Colonic mucosa (tissue), 4 donors: ENCODE measurements at regions of chr2 and their contacts with region 1.

Region 1: GRCh38 chr2:11344342-11344955 is at the start of gene ROCK2:
- DNase-seq: peak; percentile 88
- H3K4me3 ChIP-seq: peak within 1 kb of the TSS; percentile 77
- H3K27ac ChIP-seq: peak within 1 kb of the TSS; percentile 99
- H3K4me1 ChIP-seq: peaks cover 18% of the 10 kb centered on the region
- H3K27me3 ChIP-seq: no peaks in the 10 kb centered on the region
- CTCF ChIP-seq: no peak
- total RNA-seq, gene ROCK2: 62.7 to 80.9 TPM

Region 2: DNA sequence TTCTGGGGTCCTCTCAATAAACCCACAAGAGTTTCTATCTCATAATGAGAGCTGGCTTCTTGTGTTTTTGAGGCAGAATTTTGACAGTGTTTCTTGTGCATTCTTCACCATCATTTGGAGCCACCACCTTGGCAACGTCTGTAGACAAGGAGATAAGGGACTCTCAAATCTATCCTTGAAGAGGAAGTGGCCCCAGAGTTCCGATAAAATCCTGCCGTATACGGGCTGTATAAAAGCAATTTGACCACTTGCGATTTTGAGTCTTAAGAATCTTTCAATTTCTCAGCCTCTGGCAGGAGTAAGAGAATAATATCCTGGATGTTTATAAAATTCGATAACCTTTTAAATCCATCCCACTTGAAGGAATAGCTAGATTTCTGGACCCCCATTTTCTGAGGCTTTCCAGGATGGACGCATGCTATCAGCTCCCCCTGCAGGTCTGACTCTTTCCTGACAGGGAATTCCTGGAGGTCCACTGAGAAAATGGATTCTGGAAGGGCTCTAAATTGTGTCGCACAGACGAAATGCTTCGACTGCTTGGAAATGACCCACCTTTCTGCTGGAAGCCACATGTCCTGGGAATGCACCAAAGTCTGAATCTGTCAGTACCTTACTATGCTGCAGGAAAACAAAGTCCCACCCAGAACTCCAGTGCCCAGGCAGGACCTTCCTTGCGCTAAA is 67.5 kb after region 1 on chr2:
- intact Hi-C with region 1: loop called (anchors 10 kb)
- DNase-seq: peak; percentile 77
- H3K4me3 ChIP-seq: peak overlapping the region; percentile 31
- H3K27ac ChIP-seq: peak overlapping the region; percentile 3
- H3K4me1 ChIP-seq: peaks cover 8% of the 10 kb centered on the region
- H3K27me3 ChIP-seq: no peaks in the 10 kb centered on the region
- CTCF ChIP-seq: peak; percentile 68